Dorsolateral prefrontal cortex (tissue), 120 donors: ENCODE measurements at regions of chr18 and their contacts with region 1.

Region 1: DNA sequence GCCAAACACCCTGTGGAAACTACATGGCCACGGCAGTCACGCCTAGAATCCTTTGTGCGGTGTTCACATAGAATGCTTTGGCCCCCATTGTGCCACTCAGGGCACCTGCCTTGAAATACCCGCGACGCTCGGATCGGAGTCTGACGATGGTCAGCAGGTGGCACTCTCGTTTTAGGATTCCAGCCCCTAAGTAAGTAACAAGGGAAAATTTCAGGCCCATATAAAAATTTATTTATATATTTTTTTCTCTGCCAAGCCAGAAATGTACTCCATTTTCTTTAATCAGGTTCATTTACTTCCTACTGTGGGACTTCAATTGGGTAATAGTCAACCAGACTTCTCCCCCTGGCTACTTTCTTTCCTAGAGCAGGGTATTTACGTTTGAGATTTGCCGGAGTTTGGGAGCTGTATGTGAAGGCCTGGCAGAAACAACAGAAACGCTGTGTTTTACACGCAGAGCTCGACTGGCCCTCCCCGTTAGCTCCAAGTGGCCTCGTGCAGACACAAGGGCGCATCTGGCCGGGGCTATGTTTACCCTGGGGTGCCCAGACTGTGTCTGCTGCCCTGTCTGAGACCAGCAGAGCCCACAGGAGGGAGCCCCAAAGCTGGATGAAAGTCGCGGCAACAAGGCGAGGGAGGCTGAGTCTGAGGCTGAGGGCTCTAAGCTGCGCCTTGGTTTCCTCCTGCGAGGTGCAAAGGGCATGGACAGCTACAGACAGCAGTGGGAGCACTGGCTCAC is 41.6 kb downstream of the LRRC30 start:
- DNase-seq: peak; percentile 8 to 81 (median 74)
- H3K4me3 ChIP-seq: peak overlapping the region in 57 of 59 donors; percentile 8 to 64 (median 40)
- H3K27ac ChIP-seq: peak overlapping the region in 57 of 59 donors; percentile 11 to 86 (median 69)
- H3K27me3 ChIP-seq: no peaks in the 10 kb centered on the region
- CTCF ChIP-seq: peak; percentile 36 to 87 (median 68)

Region 2: DNA sequence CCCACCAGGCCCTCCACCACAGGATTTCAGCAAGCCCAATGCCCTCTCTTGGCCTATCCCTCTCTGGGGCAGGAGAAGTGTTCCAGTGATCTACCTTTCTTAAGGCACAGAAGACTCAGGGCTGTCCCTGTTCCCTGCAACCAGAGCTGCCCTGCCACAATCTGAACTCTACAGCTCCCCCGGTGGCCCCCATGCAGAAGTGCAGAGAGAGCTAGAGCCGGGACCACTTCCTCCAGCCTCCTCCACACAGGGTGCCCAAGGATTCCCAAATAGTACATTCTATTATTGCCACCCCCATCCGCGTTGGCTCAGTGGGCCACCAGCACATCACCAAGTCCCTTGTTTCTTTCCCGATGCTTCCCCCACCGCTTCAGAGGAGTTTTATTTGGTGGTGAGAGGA is 179.9 kb after region 1 on chr18:
- intact Hi-C with region 1: loop called in 1 of 2 experiments (anchors 10 kb)
- DNase-seq: peak in 1 of 10 donors; percentile 54
- H3K4me3 ChIP-seq: no peak overlapping the region
- H3K27ac ChIP-seq: no peak overlapping the region
- H3K27me3 ChIP-seq: peaks cover 0 to 4% (median 0%) of the 10 kb centered on the region in 45 donors
- CTCF ChIP-seq: peak in 53 of 56 donors; percentile 27 to 66 (median 54)

Region 3: GRCh38 chr18:7459851-7460770 is 187.6 kb after region 1 on chr18:
- intact Hi-C with region 1: loop called in 1 of 2 experiments (anchors 2 kb)
- DNase-seq: peak in 8 of 10 donors; percentile 15 to 80 (median 60)
- H3K4me3 ChIP-seq: peak overlapping the region in 58 of 59 donors; percentile 3 to 63 (median 37)
- H3K27ac ChIP-seq: peak overlapping the region in 58 of 59 donors; percentile 1 to 96 (median 82)
- H3K27me3 ChIP-seq: peaks cover 0 to 2% (median 0%) of the 10 kb centered on the region in 45 donors
- CTCF ChIP-seq: peak in 2 of 56 donors; percentile 6 to 13

Region 4: GRCh38 chr18:7566567-7567473 is 294.3 kb after region 1 on chr18 and contains the start of gene PTPRM:
- intact Hi-C with region 1: loop called (anchors 1 kb)
- DNase-seq: peak; percentile 28 to 85 (median 68)
- H3K4me3 ChIP-seq: peak within 1 kb of the TSS; percentile 54 to 87 (median 76)
- H3K27ac ChIP-seq: peak within 1 kb of the TSS; percentile 49 to 99 (median 94)
- H3K27me3 ChIP-seq: peaks cover 0 to 3% (median 0%) of the 10 kb centered on the region in 45 donors
- CTCF ChIP-seq: peak in 37 of 56 donors; percentile 1 to 66 (median 28)
- total RNA-seq, gene PTPRM: 63.9 to 139 (median 104) TPM

Region 5: GRCh38 chr18:8389391-8390340 is 1117.2 kb after region 1 on chr18:
- intact Hi-C with region 1: loop called (anchors 5 to 10 kb)
- DNase-seq: peak in 9 of 10 donors; percentile 17 to 82 (median 64)
- H3K4me3 ChIP-seq: no peak overlapping the region
- H3K27ac ChIP-seq: no peak overlapping the region
- H3K27me3 ChIP-seq: no peaks in the 10 kb centered on the region
- CTCF ChIP-seq: peak in 55 of 56 donors; percentile 36 to 90 (median 81)

Region 6: GRCh38 chr18:8478166-8478967 is 1205.9 kb after region 1 on chr18:
- intact Hi-C with region 1: loop called (anchors 5 kb)
- DNase-seq: peak in 5 of 10 donors; percentile 20 to 66 (median 45)
- H3K4me3 ChIP-seq: no peak overlapping the region
- H3K27ac ChIP-seq: no peak overlapping the region
- H3K27me3 ChIP-seq: no peaks in the 10 kb centered on the region
- CTCF ChIP-seq: peak in 54 of 56 donors; percentile 37 to 74 (median 63)